G401 (cell line): ENCODE measurements at regions of chr14 and their contacts with region 1.

Region 1: DNA sequence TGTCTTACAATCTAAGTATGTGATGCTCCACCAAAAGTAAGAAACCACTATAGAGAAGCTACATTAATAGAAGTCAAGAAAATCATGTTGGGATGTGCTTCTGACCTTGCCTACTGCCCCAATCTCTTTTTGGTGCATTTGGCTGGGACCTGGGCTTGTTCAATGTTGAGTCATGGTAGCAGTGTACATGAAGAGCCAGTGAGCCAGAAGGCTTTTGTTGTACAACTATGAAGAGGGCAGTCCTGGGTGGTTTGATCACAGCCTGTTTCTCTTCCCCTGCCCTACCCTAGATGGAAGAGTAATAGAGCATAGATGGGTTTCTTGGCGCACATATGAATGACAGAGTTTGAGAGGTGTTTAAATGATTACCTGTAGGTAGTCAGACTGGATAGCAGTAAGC is 56.4 kb downstream of the UBR7 start:
- DNase-seq: no peak

Region 2: DNA sequence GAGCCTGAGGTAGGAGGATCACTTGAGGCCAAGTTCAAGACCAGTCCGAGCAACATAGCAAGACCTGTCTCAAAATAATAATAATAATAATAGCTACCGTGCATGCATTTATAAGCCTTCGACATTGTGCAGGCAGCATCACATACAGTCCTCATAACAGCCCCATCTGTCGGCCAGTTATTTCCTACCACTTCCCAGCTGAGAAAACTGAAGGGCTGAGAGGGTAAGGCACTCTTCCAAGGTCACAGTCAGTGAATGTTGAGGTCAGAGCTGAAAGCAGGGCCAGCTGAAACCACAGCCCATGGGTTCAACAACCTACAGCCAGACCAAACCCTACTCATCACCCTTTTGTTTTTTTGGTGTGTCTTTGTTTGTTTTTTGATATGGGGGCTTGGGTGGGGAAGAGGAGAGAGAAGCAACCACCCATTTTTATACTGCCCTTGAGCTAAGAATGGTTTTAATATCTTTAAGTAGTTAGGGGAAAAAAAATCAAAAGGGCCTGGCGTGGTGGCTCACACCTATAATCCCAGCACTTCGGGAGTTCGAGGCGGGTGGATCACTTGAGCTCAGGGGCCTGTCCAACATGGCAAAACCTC is 130.8 kb before region 1 on chr14:
- in situ Hi-C with region 1: no loop called
- DNase-seq: peak; percentile 23

Region 3: DNA sequence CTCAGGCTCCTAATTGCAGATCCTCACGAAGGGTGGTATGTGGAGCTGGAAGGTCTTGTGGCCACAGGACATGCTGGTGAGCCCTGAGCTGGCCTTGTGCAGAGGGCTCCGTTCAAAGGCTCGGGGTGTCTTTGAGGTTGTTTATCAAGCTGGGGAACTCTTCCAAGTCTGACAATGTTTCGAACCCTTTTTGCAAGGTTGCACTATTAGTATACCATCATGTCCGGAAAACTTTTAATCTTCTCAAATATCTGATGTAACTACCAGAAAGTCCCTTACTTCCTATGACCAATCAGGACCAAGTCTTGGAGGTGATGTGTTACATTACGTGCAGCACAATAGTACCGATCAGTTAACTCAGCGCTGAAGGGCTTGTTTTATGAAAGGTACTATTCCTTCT is 34.9 kb before region 1 on chr14:
- in situ Hi-C with region 1: loop called (anchors 5 kb)
- DNase-seq: no peak